Activated naive CD4-positive, alpha-beta T cell treated with anti-CD3 and anti-CD28 coated beads, Interleukin-2, amount 10 ng/mL, durations not matched to agents 7 days and 5 days (primary cell): ENCODE measurements at regions of chr2 and their contacts with region 1.

Region 1: DNA sequence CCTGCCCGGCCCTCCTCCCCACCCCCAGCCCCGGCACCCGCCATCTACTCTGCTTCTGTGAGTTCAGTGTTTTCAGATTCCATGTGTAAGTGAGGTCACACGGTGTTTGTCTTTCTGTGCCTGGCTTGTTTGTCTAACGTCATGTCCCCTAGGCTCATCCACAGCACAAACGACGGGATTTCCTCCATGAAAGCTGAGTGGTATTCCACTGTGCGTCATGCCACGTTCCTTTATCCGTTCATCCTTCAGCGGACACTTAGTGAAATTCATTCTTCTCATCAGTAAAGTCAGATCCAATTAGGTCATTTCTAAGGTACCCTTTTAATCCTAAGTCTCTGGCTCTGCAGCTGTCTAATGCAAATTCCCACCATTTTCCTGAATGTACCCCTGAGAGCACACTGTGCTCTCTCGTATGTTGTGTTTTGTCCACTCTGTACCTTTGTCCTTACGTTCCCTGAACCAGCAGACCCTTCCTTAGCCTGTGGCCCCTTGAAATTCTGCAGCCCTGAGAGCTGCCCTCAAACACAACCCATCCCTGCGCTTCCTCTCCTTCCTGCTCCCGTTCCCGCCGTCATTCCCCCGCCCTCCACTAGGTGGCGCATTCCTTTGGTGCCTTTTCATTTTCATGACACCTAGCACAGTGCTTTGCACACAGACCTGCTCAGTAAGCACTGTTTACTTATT is 44.1 kb downstream of the TRAPPC12 start:
- DNase-seq: peak; percentile 81
- H3K4me3 Mint-ChIP-seq: no peak overlapping the region
- H3K27ac Mint-ChIP-seq: no peak overlapping the region
- H3K4me1 Mint-ChIP-seq: no peaks in the 10 kb centered on the region
- H3K27me3 Mint-ChIP-seq: no peaks in the 10 kb centered on the region

Region 2: GRCh38 chr2:3390041-3390440 is 33.6 kb before region 1 on chr2:
- CTCF ChIA-PET with region 1: no interaction called
- DNase-seq: no peak
- H3K4me3 Mint-ChIP-seq: no peak overlapping the region
- H3K27ac Mint-ChIP-seq: no peak overlapping the region
- H3K4me1 Mint-ChIP-seq: no peaks in the 10 kb centered on the region
- H3K27me3 Mint-ChIP-seq: no peaks in the 10 kb centered on the region

Region 3: DNA sequence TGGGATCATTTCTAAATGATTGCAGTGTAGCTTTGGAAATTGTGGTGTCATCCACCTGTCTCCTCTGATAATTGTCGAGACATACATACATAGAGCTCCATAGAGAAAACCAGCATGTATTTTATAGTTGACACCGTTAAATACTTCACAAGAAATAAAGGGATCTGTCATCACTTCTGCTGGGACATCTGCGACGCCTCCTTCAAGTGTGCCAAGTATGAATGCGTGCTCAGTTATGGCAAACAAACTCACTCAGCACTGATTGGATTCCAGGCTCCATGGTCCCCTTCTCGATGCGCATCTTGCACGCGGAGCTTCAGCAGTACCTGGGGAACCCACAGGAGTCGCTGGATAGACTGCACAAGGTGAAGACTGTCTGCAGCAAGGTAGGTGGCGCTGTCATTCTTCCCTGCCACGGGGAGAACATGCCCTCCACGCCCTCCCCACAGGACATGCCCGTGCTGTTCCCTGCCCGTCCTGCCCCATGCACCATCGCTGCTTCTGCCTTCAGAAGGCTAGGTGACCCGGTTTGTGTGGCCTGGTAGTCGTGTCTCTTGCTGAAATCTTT is 20.0 kb after region 1 on chr2:
- CTCF ChIA-PET with region 1: interaction called, 33 read pairs
- DNase-seq: no peak
- H3K4me3 Mint-ChIP-seq: no peak overlapping the region
- H3K27ac Mint-ChIP-seq: no peak overlapping the region
- H3K4me1 Mint-ChIP-seq: peaks cover 2% of the 10 kb centered on the region
- H3K27me3 Mint-ChIP-seq: no peaks in the 10 kb centered on the region

Region 4: DNA sequence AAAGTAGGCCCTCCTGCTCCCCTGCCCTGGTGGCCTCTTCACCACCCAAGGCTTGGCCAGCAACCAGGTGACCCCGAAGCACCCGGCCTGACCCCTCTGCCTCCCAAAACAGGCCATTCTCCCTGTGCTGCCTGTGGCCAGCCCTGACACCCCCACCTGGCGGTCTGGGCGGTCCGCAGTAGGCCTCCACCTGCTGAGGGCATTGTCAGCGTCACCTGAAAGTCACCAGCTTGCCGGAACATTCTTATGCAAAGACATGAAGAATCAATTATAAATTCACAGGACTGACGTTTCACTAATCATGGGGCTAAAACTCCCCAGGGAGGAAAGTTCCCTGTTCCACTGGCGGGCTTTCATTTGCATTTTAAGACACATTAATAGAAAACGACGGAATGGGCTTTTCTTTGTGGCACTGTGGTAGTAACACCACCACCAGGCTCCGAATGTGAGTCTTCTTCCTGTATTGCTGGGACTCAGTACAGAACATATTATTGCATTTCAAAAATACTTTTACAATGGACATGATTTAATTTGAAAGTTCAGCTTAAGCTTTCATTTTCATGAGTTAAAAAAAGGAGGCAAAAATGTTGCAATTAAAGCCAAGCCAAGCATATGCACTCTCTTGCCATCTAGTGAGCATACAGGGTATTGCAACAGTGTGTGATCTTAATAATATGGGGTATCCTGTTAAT is 38.3 kb after region 1 on chr2:
- CTCF ChIA-PET with region 1: interaction called, 15 read pairs
- DNase-seq: peak; percentile 51
- H3K4me3 Mint-ChIP-seq: no peak overlapping the region
- H3K27ac Mint-ChIP-seq: peak overlapping the region; percentile 60
- H3K4me1 Mint-ChIP-seq: peaks cover 14% of the 10 kb centered on the region
- H3K27me3 Mint-ChIP-seq: no peaks in the 10 kb centered on the region

Region 5: DNA sequence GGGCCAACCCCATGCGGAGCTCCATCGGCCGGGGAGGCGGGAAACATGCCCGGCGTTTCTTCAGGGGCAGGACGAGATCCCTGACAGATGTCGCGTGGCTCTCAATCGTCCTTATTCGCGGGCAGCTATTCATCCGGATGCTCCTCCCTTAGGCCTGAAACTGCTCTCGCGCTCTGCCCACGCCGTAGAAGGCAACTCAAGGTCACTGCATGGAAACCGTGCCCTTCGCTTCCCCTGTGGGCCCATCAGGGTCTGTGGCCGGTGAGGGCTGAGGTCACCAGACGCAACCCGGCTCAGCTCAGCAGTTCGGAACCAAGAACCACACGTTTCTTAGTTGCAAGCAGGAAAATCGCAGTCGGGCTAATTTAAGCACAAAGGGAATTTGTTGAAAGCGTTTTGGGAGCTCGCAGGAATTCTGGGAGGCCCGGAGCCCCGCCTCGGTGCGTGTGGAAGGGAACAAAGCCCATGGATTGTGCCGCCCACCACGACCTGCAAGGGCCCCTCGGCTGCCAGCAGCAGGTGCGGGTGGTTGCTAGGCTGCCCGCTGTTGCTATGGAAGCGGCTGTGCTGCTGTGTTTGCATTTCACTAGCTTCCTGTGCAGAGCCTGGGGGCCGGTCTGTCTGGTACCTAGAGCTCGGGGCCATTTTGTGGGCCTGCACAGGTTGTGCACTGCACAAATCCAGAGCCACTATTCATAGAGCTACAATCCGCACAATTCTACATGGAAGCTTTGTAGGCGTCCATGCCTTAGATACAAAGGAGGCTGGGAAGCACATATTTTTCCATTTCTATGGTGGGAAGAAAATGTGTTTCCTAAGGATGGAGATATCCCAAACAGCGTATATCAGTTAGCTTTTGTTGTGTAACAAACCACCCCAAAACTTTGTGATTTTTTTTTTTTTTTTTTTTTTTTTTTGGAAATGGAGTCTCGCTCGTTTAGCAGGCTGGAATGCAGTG is 228.3 kb after region 1 on chr2:
- CTCF ChIA-PET with region 1: interaction called, 21 read pairs
- DNase-seq: peak; percentile 86
- H3K4me3 Mint-ChIP-seq: peak overlapping the region; percentile 70
- H3K27ac Mint-ChIP-seq: peak overlapping the region; percentile 69
- H3K4me1 Mint-ChIP-seq: peaks cover 16% of the 10 kb centered on the region
- H3K27me3 Mint-ChIP-seq: peaks cover 11% of the 10 kb centered on the region